Panc1 (cell line): ENCODE measurements at regions of chr17 and their contacts with region 1.

Region 1: GRCh38 chr17:41254861-41255260 is 323 bp upstream of the KRTAP9-9 start:
- DNase-seq: no peak
- ATAC-seq: no peak
- H3K4me3 ChIP-seq: no peak overlapping the region
- H3K27ac ChIP-seq: no peak overlapping the region
- H3K4me1 ChIP-seq: no peaks in the 10 kb centered on the region
- H3K27me3 ChIP-seq: peaks cover 34% of the 10 kb centered on the region
- CTCF ChIP-seq: no peak

Region 2: GRCh38 chr17:41284043-41284442 is 29.2 kb after region 1 on chr17:
- CTCF ChIA-PET with region 1: no interaction called
- POLR2A ChIA-PET with region 1: no interaction called
- in situ Hi-C with region 1: no loop called
- intact Hi-C with region 1: no loop called
- DNase-seq: no peak
- ATAC-seq: no peak
- H3K4me3 ChIP-seq: no peak overlapping the region
- H3K27ac ChIP-seq: no peak overlapping the region
- H3K4me1 ChIP-seq: no peaks in the 10 kb centered on the region
- H3K27me3 ChIP-seq: peaks cover 2% of the 10 kb centered on the region; the same call in 1 of the 2 replicates
- CTCF ChIP-seq: no peak

Region 3: DNA sequence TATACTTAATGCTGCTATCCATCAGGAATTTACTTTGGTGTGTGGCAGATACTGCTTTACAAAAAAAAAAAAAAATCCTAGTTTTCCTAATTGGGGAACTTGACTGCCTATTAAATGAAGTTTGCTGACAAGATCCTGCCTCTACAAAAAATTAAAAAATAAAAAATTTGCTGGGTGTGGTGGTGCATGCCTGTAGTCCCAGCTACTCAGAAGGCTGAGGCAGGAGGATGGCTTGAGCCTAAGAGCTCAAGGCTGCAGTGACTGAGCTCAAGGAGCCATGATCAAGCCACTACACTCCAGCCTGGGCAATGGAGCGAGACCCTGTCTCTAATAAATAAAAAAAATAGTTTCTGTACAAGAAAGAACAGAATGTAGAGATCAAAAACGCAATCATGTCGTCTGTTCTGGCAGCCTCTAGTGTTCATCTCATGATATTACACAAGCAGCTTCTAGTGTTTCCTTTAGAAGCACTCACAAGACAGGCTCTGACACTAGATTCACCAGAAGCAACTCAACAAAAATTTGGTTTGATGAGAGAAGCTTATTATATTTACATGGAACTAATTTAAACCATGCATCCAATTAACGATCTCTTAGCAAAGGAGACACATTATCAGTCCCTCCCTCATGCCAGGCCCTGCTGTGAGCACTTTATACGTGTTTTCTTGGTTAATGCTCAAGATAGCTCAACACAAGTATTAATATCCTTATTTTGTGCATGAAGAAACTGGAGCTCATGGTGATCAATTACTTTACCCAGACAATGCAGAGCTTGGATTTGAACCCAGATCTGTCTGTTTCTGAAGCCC is 67.4 kb after region 1 on chr17:
- CTCF ChIA-PET with region 1: interaction called, 12 read pairs
- POLR2A ChIA-PET with region 1: no interaction called
- in situ Hi-C with region 1: no loop called
- intact Hi-C with region 1: no loop called
- DNase-seq: peak; percentile 57
- ATAC-seq: peak; percentile 72
- H3K4me3 ChIP-seq: no peak overlapping the region
- H3K27ac ChIP-seq: no peak overlapping the region
- H3K4me1 ChIP-seq: no peaks in the 10 kb centered on the region
- H3K27me3 ChIP-seq: no peaks in the 10 kb centered on the region
- CTCF ChIP-seq: peak; percentile 89